Gastrocnemius medialis (tissue), 4 donors: ENCODE measurements at regions of chr11 and their contacts with region 1.

Region 1: DNA sequence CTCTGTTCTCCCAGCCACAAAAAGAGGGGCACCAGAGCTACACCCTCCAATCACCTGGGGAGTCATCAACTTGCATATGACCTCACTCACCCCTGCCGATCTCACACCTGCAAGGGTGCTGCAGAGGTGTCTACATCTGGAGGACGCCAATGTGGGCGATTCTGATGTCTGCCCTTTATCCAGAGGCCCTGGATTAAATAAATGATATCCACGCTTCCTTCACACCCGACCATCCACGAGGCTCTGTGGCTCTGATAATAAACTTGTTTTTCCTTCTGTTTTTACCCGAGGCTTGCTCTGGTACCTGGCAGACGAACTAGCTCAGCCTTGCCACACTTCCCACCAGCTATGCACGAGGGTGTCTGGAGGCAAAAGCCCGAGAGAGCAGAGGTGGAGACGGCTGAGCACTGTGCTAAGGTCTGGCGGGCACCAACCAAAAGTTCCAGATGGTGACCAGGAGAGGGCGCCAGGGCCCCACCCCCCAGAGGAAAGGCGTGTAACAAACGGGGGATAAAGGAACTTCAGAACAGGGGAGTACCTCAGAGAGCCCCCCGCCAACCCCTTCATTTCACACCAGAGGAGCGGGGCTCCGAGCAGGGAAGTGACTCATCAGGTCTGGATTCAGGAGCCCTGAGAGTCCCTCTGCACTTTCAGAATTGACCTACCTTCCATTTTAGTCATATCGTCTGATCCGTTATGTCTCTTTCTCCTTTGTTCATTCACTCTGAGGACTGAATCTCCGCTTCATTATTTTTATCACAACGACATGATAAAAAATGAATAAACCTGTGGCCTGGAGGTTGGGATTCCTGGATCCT is 13.5 kb downstream of the SCN3B start:
- DNase-seq: peak; percentile 33 to 52
- ATAC-seq: peak; percentile 74 to 82
- H3K4me3 ChIP-seq: no peak overlapping the region
- H3K27ac ChIP-seq: peak overlapping the region; percentile 27 to 73 (median 50)
- H3K4me1 ChIP-seq: peaks cover 9 to 14% of the 10 kb centered on the region in 2 donors
- H3K27me3 ChIP-seq: no peaks in the 10 kb centered on the region
- CTCF ChIP-seq: peak; percentile 70 to 93 (median 88)
- POLR2A ChIP-seq: no peak

Region 2: DNA sequence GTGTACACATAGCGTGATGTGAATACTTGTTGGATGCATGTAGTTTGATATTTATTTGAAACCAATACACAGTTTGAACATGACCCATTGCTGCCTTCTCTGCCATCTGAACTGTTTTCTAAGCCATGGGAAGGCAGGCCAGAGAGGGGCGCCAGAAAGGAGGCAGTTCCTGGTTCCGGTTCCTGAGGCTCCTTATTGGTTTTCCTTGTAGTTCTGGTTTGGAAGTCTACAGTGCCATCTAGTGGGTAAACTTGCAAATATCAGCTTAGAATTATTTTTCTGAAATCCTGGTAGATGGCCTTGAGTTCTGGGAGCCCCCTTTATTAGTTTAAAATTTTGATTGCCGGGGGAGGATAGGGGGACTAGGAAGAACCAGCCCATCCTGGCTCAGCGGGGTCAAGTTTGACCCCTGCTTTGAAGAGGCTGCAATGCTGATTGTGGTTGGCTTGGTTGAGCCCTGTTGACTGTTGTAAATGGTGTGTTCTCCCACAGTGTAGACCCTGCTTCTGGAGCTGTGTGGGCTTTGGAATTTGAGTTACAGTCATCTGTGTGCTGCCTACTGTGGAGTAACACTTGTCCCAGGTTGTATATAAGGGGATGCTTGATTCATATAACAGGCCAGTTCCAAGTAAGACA is 162.4 kb before region 1 on chr11:
- in situ Hi-C with region 1: no loop called
- intact Hi-C with region 1: no loop called
- DNase-seq: peak in 1 of 2 donors; percentile 36
- ATAC-seq: peak; percentile 56 to 77
- H3K4me3 ChIP-seq: no peak overlapping the region
- H3K27ac ChIP-seq: no peak overlapping the region
- H3K4me1 ChIP-seq: peaks cover 0 to 8% of the 10 kb centered on the region in 2 donors
- H3K27me3 ChIP-seq: no peaks in the 10 kb centered on the region
- CTCF ChIP-seq: peak; percentile 68 to 78 (median 74)
- POLR2A ChIP-seq: no peak

Region 3: DNA sequence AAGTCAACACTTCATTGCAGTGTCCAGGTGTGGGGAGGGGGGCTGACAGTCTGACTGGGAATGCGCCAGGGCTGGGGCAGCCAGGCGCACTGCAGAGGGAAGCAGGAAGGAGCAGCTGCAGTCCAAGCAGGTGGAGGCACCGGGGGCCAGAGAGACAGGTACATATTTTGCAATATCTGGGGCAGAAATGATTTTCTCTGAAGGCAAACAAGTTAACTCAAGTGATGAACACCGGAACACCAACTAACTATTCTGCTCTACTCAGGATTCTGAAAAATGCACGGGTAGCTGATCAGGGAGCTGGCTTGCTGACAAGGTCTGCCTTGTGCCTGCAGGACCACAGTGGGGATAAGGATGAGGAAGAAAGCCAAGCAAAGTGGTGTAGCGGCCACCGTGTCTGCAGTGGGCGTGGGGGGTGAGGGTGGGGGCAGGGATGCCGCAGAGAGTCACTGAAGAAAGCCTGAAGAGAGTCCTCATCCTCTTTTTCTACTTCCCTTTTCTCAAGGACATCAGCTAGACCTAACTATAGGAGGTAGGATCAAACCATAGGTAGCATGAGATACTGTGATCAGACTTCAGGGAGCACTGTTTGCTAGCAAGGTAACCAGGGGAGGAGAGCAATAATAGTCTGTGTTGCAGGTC is 69.8 kb before region 1 on chr11:
- in situ Hi-C with region 1: no loop called
- intact Hi-C with region 1: no loop called
- DNase-seq: no peak
- ATAC-seq: no peak
- H3K4me3 ChIP-seq: no peak overlapping the region
- H3K27ac ChIP-seq: no peak overlapping the region
- H3K4me1 ChIP-seq: no peaks in the 10 kb centered on the region
- H3K27me3 ChIP-seq: no peaks in the 10 kb centered on the region
- CTCF ChIP-seq: no peak
- POLR2A ChIP-seq: no peak

Region 4: DNA sequence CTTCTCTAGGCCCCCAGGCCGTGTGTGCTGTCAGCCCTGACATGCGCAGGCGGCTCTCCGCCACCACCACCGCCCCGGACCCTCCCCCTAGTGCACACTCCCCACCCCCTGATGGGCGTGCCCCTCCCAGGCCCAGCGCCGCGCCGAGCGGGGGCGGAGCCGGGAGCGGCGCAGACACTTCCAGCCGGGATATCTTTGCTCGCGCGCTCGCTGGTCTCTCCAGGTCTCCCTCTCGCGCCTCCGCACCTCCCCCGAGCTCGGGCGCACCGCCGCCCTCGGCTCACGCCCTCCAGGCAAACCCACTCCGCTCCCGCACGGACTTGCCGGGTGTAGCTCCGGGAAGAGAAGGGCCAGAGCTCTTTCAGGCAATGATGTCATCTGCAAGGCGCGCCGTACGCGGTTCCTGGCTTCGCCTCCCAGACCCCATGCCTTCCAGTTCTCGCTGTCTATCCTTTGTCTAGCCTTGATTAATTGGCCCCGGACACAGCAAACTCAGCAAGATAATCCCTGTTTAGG is 13.7 kb after region 1 on chr11 and contains the start of gene SCN3B:
- in situ Hi-C with region 1: no loop called
- intact Hi-C with region 1: loop called (anchors 2 kb)
- DNase-seq: peak; percentile 65 to 69
- ATAC-seq: peak; percentile 76 to 80
- H3K4me3 ChIP-seq: peak within 1 kb of the TSS; percentile 68 to 94 (median 72)
- H3K27ac ChIP-seq: peak within 1 kb of the TSS; percentile 85 to 95 (median 90)
- H3K4me1 ChIP-seq: peaks cover 26 to 36% of the 10 kb centered on the region in 2 donors
- H3K27me3 ChIP-seq: no peaks in the 10 kb centered on the region
- CTCF ChIP-seq: no peak
- POLR2A ChIP-seq: peak; percentile 53 to 68
- total RNA-seq, gene SCN3B: 3.0 to 10.5 (median 4.9) TPM

Region 5: GRCh38 chr11:123707606-123708205 is 66.8 kb after region 1 on chr11:
- in situ Hi-C with region 1: loop called (anchors 5 to 10 kb)
- intact Hi-C with region 1: loop called (anchors 1 kb)
- DNase-seq: peak; percentile 30 to 40
- ATAC-seq: peak; percentile 77
- H3K4me3 ChIP-seq: no peak overlapping the region
- H3K27ac ChIP-seq: no peak overlapping the region
- H3K4me1 ChIP-seq: no peaks in the 10 kb centered on the region
- H3K27me3 ChIP-seq: no peaks in the 10 kb centered on the region
- CTCF ChIP-seq: peak; percentile 60 to 79 (median 73)
- POLR2A ChIP-seq: no peak